Colonic mucosa (tissue), 4 donors: ENCODE measurements at regions of chr3 and their contacts with region 1.

Region 1: DNA sequence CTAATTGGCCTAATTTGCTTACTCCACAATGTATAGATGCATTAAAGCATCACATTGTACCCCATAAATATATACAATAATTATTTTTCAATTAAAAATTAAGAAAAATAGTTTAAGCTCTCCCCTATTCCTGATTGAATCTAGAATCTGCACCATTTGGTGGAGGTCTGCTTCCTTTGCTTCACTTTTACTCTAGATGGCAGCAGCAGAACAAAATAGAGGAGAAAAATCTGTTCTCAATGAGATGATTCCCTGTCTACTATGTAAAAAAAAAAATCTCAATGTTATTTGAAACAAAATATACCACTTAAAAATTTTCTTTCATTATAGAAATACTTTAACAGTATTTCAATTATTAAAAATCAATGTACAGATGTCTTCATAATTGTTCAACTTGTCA is 109.6 kb upstream of the FXR1 start:
- DNase-seq: no peak
- H3K4me3 ChIP-seq: no peak overlapping the region
- H3K27ac ChIP-seq: no peak overlapping the region
- H3K4me1 ChIP-seq: no peaks in the 10 kb centered on the region
- H3K27me3 ChIP-seq: no peaks in the 10 kb centered on the region
- CTCF ChIP-seq: no peak

Region 2: GRCh38 chr3:181176601-181177000 is 373.8 kb after region 1 on chr3:
- intact Hi-C with region 1: loop called (anchors 10 kb)
- DNase-seq: peak; percentile 52
- H3K4me3 ChIP-seq: no peak overlapping the region
- H3K27ac ChIP-seq: no peak overlapping the region
- H3K4me1 ChIP-seq: no peaks in the 10 kb centered on the region
- H3K27me3 ChIP-seq: no peaks in the 10 kb centered on the region
- CTCF ChIP-seq: peak; percentile 21